ENCODE measurements at regions of chr1 and their contacts with region 1.

Region 1: DNA sequence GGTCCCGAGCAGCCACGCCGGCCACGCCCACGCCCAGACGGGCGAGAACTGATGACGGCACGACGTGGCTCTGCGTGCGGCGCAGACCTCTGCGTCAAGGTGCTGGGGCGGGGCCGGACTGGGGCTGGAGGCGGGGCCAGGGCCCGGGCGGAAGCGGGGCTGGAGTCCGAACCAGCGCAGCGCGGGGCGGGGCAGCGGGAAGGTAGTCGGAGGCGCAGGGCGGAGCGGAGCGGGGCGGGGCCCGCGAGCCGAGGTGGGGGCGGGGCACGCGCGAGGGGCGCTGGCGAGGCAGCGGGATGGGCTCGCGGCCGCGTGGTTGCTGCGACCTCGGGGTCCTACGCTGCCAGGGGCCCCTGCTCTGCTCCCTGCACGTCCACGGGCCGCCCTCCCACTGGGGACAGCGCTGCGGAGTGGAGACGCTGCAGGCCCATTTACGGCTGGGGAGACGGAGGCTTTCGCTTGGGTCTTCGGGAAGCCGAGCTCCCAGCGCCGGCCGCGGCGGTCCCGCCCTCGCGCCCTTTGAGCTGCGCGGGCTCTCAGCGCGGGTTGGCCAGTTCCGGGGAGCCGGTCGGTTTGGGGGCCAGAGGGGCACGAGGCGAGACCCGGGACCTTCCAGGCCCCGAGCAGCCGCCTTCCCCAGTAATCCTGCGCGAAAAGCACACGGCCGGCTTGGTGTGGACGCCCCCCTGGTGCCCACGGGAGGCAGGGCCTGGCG is at the start of gene PEX10:
- DNase-seq: peak; percentile 96 to 98 (median 97)
- H3K4me3 ChIP-seq: peak within 1 kb of the TSS; percentile 47 to 70
- H3K4me3 Mint-ChIP-seq: peak within 1 kb of the TSS; percentile 82 to 94 (median 87)
- H3K27ac ChIP-seq: peak within 1 kb of the TSS; percentile 84
- H3K27ac Mint-ChIP-seq: peak within 1 kb of the TSS; percentile 75 to 99 (median 92)
- H3K4me1 ChIP-seq: peaks cover 55% of the 10 kb centered on the region
- H3K4me1 Mint-ChIP-seq: peaks cover 17 to 51% (median 32%) of the 10 kb centered on the region in 4 donors
- H3K27me3 ChIP-seq: no peaks in the 10 kb centered on the region
- H3K27me3 Mint-ChIP-seq: no peaks in the 10 kb centered on the region
- total RNA-seq, gene PEX10: 11.7 to 13.0 TPM

Region 2: DNA sequence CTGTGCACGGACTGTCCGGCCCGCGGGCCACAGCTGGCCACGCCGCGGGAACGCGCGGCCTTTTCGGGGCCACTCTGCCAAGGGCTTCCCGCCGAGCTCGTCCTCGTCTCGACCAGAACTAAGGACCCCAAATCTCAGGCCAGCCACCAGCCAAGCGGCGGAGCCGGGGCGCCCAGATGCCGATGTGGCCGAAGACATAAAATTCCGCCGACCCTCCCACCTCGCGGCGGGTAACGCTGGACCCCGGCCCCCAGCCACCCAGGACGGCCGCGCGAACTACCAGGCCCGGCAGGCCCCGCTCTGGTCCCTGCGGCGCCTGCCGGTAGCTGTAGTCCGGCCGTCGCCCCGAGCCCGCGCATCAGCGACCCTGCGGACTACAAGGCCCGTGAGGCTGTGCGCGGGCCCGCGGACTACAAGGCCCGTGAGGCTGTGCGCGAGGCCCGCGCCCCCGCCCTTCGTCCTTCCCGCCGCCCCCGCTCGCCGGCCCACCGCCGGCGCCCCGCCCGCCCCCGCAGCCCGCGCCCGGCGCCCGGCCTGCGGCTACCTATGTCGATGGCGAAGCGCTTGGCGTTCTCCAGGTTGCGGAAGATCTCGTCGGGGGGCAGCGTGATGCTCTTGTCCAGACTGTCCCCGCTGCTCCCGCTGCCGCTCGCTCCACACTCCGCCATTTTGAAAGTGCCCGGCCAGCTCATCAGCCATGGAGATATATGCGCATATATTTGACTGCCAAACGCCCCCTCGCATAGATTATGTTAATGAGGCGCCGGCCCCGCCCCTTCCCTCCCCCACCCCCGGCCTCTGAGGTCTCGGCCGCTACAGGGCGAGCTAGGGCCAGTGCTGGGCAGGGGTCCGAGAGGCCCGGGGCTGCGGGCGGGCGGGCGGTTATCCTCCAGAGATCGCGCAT is 113.5 kb after region 1 on chr1 and contains the start of gene PANK4:
- CTCF ChIA-PET with region 1: interaction called, 25 read pairs
- POLR2A ChIA-PET with region 1: interaction called, 59 read pairs
- intact Hi-C with region 1: loop called (anchors 1 kb)
- DNase-seq: peak; percentile 86 to 90 (median 89)
- H3K4me3 ChIP-seq: peak within 1 kb of the TSS; percentile 31 to 96
- H3K4me3 Mint-ChIP-seq: peak within 1 kb of the TSS; percentile 89 to 97 (median 95)
- H3K27ac ChIP-seq: peak within 1 kb of the TSS; percentile 86
- H3K27ac Mint-ChIP-seq: peak within 1 kb of the TSS; percentile 86 to 98 (median 97)
- H3K4me1 ChIP-seq: peaks cover 64% of the 10 kb centered on the region
- H3K4me1 Mint-ChIP-seq: peaks cover 27 to 63% (median 47%) of the 10 kb centered on the region in 4 donors
- H3K27me3 ChIP-seq: peaks cover 9% of the 10 kb centered on the region
- H3K27me3 Mint-ChIP-seq: peaks cover 5 to 11% of the 10 kb centered on the region in 2 donors
- total RNA-seq, gene PANK4: 88.9 to 93.7 TPM

Region 3: GRCh38 chr1:2586154-2587070 is 173.7 kb after region 1 on chr1 and contains the start of gene PRXL2B:
- CTCF ChIA-PET with region 1: interaction called, 9 read pairs
- POLR2A ChIA-PET with region 1: interaction called, 33 read pairs
- intact Hi-C with region 1: loop called (anchors 1 kb)
- DNase-seq: peak; percentile 95 to 98 (median 95)
- H3K4me3 ChIP-seq: peak within 1 kb of the TSS; percentile 52 to 72
- H3K4me3 Mint-ChIP-seq: peak within 1 kb of the TSS; percentile 87 to 98 (median 92)
- H3K27ac ChIP-seq: peak within 1 kb of the TSS; percentile 90
- H3K27ac Mint-ChIP-seq: peak within 1 kb of the TSS; percentile 95 to 99 (median 97)
- H3K4me1 ChIP-seq: peaks cover 42% of the 10 kb centered on the region
- H3K4me1 Mint-ChIP-seq: peaks cover 22 to 56% (median 36%) of the 10 kb centered on the region in 4 donors
- H3K27me3 ChIP-seq: no peaks in the 10 kb centered on the region
- H3K27me3 Mint-ChIP-seq: no peaks in the 10 kb centered on the region
- total RNA-seq, gene PRXL2B: 26.5 to 27.2 TPM

Region 4: DNA sequence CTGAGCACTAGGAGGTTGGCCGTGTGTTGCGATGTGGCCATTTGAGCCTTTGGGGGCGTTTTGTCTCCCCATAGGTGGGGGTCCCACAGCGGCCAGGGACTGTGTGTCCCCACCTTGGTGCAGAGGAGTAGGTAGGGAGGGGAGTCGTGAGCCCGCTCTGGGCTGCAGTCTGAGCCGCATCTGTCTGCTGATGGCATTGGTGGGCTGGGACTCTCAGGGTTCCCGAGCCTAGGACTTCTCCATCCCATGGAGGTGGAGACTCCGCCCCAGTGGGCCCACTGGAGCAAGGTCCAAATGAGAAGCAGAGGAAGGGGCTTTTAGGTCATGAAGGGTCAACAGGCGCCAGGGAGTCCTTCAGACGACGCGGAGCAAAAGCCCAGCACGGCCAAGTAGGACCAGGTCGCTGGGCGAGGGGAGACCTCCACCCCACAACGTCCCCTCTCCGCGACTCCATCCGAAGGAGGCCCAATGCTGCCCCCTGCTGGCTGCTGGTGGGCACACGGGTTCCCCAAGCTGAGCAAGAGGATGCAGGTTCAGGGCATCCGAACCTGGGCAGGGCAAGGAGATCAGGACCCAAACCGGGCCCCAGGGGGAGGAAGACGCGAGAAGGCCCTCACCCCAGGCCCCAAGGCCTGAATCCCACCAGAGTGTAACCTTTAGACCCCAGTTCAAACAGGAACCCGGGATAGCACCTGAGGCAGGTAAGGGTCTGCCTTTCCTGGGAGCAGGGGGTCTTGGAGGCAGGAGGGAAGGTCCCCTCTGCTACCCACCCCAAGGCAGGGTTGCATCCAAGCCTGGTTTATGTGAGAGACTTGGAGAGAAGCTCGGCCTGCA is 373.9 kb after region 1 on chr1:
- CTCF ChIA-PET with region 1: interaction called, 14 read pairs
- POLR2A ChIA-PET with region 1: interaction called, 5 read pairs
- intact Hi-C with region 1: no loop called
- DNase-seq: peak; percentile 52 to 66 (median 61)
- H3K4me3 ChIP-seq: no peak overlapping the region
- H3K4me3 Mint-ChIP-seq: no peak overlapping the region
- H3K27ac ChIP-seq: no peak overlapping the region
- H3K27ac Mint-ChIP-seq: no peak overlapping the region
- H3K4me1 ChIP-seq: no peaks in the 10 kb centered on the region
- H3K4me1 Mint-ChIP-seq: peaks cover 0 to 9% (median 3%) of the 10 kb centered on the region in 4 donors
- H3K27me3 ChIP-seq: peaks cover 5% of the 10 kb centered on the region
- H3K27me3 Mint-ChIP-seq: peaks cover 26 to 28% of the 10 kb centered on the region in 2 donors

Region 5: GRCh38 chr1:2914702-2915101 is 502.0 kb after region 1 on chr1:
- CTCF ChIA-PET with region 1: no interaction called
- POLR2A ChIA-PET with region 1: no interaction called
- intact Hi-C with region 1: loop called (anchors 5 kb)
- DNase-seq: no peak
- H3K4me3 ChIP-seq: no peak overlapping the region
- H3K4me3 Mint-ChIP-seq: no peak overlapping the region
- H3K27ac ChIP-seq: no peak overlapping the region
- H3K27ac Mint-ChIP-seq: no peak overlapping the region
- H3K4me1 ChIP-seq: no peaks in the 10 kb centered on the region
- H3K4me1 Mint-ChIP-seq: no peaks in the 10 kb centered on the region
- H3K27me3 ChIP-seq: no peaks in the 10 kb centered on the region
- H3K27me3 Mint-ChIP-seq: no peaks in the 10 kb centered on the region

Measured in CD4-positive, alpha-beta memory T cell (primary cell).